Naive thymus-derived CD4-positive, alpha-beta T cell (primary cell): ENCODE measurements at regions of chr16 and their contacts with region 1.

Region 1: DNA sequence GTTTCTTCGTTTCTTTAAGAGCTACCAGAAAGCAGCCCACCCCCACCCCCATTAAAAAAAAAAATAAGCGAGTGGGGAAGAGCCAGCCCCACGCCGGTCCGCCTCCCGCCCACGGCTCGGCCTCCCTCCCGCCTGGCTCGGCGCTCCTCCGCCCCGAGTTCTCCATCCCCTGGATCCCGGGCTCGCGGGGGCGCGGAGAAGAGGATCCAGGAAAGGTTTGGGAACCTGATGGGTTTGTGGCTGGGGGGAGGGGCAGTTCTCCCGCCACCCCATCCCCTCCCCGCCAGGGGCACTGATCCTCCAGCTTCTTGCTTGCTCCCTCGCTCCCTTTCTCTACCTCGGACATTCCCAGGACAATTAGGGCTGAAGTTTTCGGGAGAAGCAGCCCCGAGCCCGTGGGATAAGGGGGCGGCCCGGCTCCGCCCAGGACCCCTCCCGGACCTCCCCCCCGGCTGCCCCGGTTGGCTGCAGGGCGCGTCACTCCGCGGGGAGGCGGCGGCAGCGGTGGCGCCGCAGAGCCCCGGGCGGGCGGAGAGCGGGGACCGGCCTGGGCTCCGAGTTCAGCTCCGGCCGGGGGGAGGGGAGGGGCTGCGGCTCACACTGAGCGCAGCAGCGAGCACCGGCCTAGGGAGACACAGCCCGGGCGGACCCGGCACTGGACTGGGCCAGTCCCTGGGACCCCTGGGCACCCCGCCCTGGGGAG is 1.0 kb upstream of the SALL1 start:
- DNase-seq: no peak
- ATAC-seq: no peak
- H3K4me3 ChIP-seq: no peak overlapping the region
- H3K4me3 Mint-ChIP-seq: no peak overlapping the region
- H3K27ac ChIP-seq: no peak overlapping the region
- H3K27ac Mint-ChIP-seq: no peak overlapping the region
- H3K4me1 ChIP-seq: no peaks in the 10 kb centered on the region
- H3K4me1 Mint-ChIP-seq: peaks cover 5 to 24% (median 19%) of the 10 kb centered on the region in 7 donors
- H3K27me3 ChIP-seq: no peaks in the 10 kb centered on the region
- H3K27me3 Mint-ChIP-seq: peaks cover 59 to 82% (median 61%) of the 10 kb centered on the region in 5 donors

Region 2: DNA sequence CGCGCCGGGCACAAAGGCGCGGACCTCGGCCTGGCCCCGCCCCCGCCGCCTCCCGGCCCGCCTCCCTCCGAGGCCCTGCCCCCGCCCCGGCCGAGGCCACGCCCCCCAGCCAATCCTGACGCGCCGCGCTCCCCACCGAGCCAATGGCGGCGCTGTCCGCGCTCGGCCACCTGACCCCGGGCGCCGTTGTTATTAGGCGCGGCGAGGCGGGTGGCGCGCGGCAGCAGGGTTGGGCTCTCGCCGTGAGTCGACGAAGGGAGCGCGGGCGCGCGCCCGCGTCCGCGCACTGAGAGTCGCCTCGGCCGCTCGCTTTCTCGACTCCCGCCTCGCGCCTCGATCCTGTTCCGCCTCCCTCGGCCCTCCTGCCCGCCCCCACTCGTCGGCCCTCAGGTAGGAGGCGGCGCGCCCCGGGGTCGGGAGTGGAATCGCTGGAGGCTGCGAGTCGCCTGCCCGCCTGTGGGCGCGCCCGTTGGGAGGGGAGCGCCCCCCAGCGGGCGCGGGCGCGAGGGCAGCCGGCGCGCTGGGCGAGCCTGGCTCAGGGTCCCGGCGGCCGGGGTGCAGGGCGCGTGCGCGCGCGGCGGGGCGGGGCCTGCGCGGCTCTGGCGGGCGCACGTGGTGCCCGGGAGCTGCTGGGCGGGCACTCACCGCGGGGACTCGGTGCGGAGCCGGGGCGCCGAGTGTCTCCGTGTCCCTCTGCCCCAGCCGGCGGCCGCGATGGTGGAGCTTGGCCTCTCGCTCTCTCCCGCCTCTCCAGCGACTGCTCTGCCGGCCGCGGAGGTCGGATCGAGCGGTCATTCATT is 1870.1 kb before region 1 on chr16:
- CTCF ChIA-PET with region 1: no interaction called
- POLR2A ChIA-PET with region 1: no interaction called
- intact Hi-C with region 1: loop called in 1 of 2 experiments (anchors 5 kb)
- DNase-seq: peak in 2 of 9 donors; percentile 8 to 76
- ATAC-seq: peak; percentile 82
- H3K4me3 ChIP-seq: no peak overlapping the region
- H3K4me3 Mint-ChIP-seq: peak overlapping the region; percentile 57 to 83 (median 72)
- H3K27ac ChIP-seq: no peak overlapping the region
- H3K27ac Mint-ChIP-seq: peak overlapping the region in 1 of 9 donors; percentile 13
- H3K4me1 ChIP-seq: no peaks in the 10 kb centered on the region
- H3K4me1 Mint-ChIP-seq: peaks cover 5 to 29% (median 13%) of the 10 kb centered on the region in 7 donors
- H3K27me3 ChIP-seq: no peaks in the 10 kb centered on the region
- H3K27me3 Mint-ChIP-seq: peaks cover 67 to 84% (median 81%) of the 10 kb centered on the region in 5 donors

Region 3: GRCh38 chr16:50806099-50807062 is 345.7 kb before region 1 on chr16:
- CTCF ChIA-PET with region 1: no interaction called
- POLR2A ChIA-PET with region 1: no interaction called
- intact Hi-C with region 1: no loop called
- DNase-seq: peak; percentile 66 to 92 (median 89)
- ATAC-seq: peak; percentile 98
- H3K4me3 ChIP-seq: peak overlapping the region; percentile 34
- H3K4me3 Mint-ChIP-seq: peak overlapping the region; percentile 12 to 90 (median 80)
- H3K27ac ChIP-seq: no peak overlapping the region
- H3K27ac Mint-ChIP-seq: peak overlapping the region; percentile 15 to 92 (median 81)
- H3K4me1 ChIP-seq: peaks cover 3 to 5% of the 10 kb centered on the region in 2 donors
- H3K4me1 Mint-ChIP-seq: peaks cover 8 to 19% (median 13%) of the 10 kb centered on the region in 7 donors
- H3K27me3 ChIP-seq: no peaks in the 10 kb centered on the region
- H3K27me3 Mint-ChIP-seq: no peaks in the 10 kb centered on the region

Region 4: GRCh38 chr16:51095084-51095881 is 56.8 kb before region 1 on chr16:
- CTCF ChIA-PET with region 1: no interaction called
- POLR2A ChIA-PET with region 1: no interaction called
- intact Hi-C with region 1: no loop called
- DNase-seq: no peak
- ATAC-seq: no peak
- H3K4me3 ChIP-seq: no peak overlapping the region
- H3K4me3 Mint-ChIP-seq: no peak overlapping the region
- H3K27ac ChIP-seq: no peak overlapping the region
- H3K27ac Mint-ChIP-seq: no peak overlapping the region
- H3K4me1 ChIP-seq: no peaks in the 10 kb centered on the region
- H3K4me1 Mint-ChIP-seq: no peaks in the 10 kb centered on the region
- H3K27me3 ChIP-seq: no peaks in the 10 kb centered on the region
- H3K27me3 Mint-ChIP-seq: peaks cover 5 to 33% (median 8%) of the 10 kb centered on the region in 5 donors